Left lung (tissue), 14 donors: ENCODE measurements at regions of chr22 and their contacts with region 1.

Region 1: DNA sequence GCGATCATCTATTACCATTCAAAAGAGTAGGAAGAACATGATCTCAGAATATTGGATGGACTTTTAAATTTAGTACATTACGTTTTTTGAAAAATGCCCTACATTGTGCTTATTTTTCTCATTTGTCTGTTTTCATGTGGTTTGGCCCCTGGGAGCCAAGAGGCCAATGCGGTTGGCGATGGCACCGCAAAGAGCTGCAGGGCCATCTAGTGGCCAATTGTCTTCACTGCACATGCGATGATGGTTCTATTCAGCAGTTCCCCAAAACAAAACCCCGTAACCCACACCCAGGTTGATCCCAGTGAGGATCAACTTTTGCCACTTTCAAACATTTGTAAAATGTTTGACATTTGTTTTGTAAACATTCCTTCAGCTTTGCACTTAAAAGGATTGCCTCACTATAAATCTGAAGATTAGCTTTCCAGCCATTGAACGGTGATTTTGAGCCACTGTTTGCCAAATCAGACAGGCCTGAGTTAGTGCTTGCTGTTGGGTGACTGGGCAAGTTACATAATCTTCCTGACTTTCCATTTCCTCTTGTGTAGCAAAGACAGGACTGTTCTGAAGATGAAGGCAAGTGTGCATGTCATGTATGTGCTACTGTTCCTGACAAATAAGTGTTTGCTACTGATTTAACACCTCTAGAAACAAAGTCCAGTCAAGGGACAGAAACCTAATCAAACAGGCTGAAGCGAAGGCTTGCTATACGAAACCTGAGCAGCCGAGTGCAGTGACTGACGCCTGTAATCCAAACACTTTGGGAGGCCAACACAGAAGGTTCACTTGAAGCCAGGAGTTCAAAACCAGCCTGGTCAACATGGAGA is 29.2 kb upstream of the XBP1 start:
- DNase-seq: peak; percentile 73 to 85 (median 84)
- ATAC-seq: peak; percentile 99
- H3K4me3 ChIP-seq: no peak overlapping the region
- H3K27ac ChIP-seq: peak overlapping the region in 1 of 2 donors; percentile 53
- H3K4me1 ChIP-seq: peaks cover 9 to 19% of the 10 kb centered on the region in 2 donors
- H3K27me3 ChIP-seq: no peaks in the 10 kb centered on the region
- CTCF ChIP-seq: peak; percentile 99

Region 2: GRCh38 chr22:28600546-28601143 is 228.9 kb before region 1 on chr22:
- intact Hi-C with region 1: loop called in 1 of 2 experiments (anchors 5 kb)
- DNase-seq: peak in 2 of 4 donors; percentile 46 to 69
- ATAC-seq: peak; percentile 72
- H3K4me3 ChIP-seq: no peak overlapping the region
- H3K27ac ChIP-seq: no peak overlapping the region
- H3K4me1 ChIP-seq: no peaks in the 10 kb centered on the region
- H3K27me3 ChIP-seq: no peaks in the 10 kb centered on the region
- CTCF ChIP-seq: peak; percentile 34 to 40